Activated CD4-positive, alpha-beta T cell treated with anti-CD3 and anti-CD28 coated beads for 36 hours (primary cell): ENCODE measurements at regions of chr3 and their contacts with region 1.

Region 1: DNA sequence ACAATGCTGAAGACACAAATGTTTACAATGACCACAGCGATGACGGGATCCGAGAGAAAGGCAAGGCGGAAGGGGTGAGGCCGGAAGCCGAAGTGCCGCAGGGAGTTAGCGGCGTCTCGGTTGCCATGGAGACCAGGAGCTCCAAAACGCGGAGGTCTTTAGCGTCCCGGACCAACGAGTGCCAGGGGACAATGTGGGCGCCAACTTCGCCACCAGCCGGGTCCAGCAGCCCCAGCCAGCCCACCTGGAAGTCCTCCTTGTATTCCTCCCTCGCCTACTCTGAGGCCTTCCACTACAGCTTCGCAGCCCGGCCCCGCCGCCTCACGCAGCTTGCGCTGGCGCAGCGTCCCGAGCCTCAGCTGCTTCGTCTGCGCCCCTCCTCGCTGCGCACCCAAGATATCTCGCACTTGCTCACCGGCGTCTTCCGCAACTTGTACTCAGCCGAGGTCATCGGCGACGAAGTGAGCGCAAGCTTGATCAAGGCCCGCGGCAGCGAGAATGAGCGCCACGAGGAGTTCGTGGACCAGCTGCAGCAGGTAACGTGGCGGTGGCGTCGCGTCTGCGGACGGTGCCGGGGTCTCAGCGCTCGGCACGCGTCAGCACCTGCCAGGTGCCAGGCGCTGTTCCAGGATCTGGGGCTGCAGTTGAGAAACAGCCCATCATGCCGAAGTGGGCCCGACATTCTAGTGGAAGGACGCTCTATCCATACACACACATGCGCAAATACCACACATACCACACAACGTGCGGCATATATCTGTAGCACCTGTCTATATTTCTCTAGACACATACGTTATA is at the start of gene DLEC1:
- DNase-seq: peak; percentile 91
- ATAC-seq: peak; percentile 70
- H3K4me3 Mint-ChIP-seq: peak within 1 kb of the TSS; percentile 29
- H3K27ac Mint-ChIP-seq: peak within 1 kb of the TSS; percentile 91
- H3K4me1 Mint-ChIP-seq: peaks cover 27% of the 10 kb centered on the region
- H3K27me3 Mint-ChIP-seq: peaks cover 2% of the 10 kb centered on the region
- total RNA-seq, gene DLEC1: 0.19 to 0.46 TPM

Region 2: GRCh38 chr3:37996785-37997301 is 42.5 kb before region 1 on chr3:
- CTCF ChIA-PET with region 1: interaction called, 7 read pairs
- POLR2A ChIA-PET with region 1: no interaction called
- intact Hi-C with region 1: loop called in 1 of 2 experiments (anchors 1 kb)
- DNase-seq: peak; percentile 92
- ATAC-seq: peak; percentile 57
- H3K4me3 Mint-ChIP-seq: no peak overlapping the region
- H3K27ac Mint-ChIP-seq: peak overlapping the region; percentile 96
- H3K4me1 Mint-ChIP-seq: peaks cover 49% of the 10 kb centered on the region
- H3K27me3 Mint-ChIP-seq: no peaks in the 10 kb centered on the region